Body of pancreas (tissue), 4 donors: ENCODE measurements at regions of chr9 and their contacts with region 1.

Region 1: GRCh38 chr9:132800038-132800648 is 77.9 kb downstream of the AK8 start:
- DNase-seq: peak; percentile 78 to 85 (median 84)
- ATAC-seq: peak; percentile 84
- H3K4me3 ChIP-seq: no peak overlapping the region
- H3K27ac ChIP-seq: no peak overlapping the region
- H3K4me1 ChIP-seq: peaks cover 5% of the 10 kb centered on the region
- H3K27me3 ChIP-seq: no peaks in the 10 kb centered on the region
- CTCF ChIP-seq: peak; percentile 77 to 95 (median 92)
- POLR2A ChIP-seq: no peak

Region 2: GRCh38 chr9:132411091-132411508 is 389.0 kb before region 1 on chr9:
- intact Hi-C with region 1: loop called (anchors 10 kb)
- DNase-seq: peak; percentile 53 to 71 (median 62)
- ATAC-seq: peak; percentile 63
- H3K4me3 ChIP-seq: no peak overlapping the region
- H3K27ac ChIP-seq: no peak overlapping the region
- H3K4me1 ChIP-seq: peaks cover 26% of the 10 kb centered on the region
- H3K27me3 ChIP-seq: peaks cover 0 to 23% of the 10 kb centered on the region in 2 donors
- CTCF ChIP-seq: peak in 6 of 7 experiments; percentile 43 to 74 (median 69)
- POLR2A ChIP-seq: no peak

Region 3: DNA sequence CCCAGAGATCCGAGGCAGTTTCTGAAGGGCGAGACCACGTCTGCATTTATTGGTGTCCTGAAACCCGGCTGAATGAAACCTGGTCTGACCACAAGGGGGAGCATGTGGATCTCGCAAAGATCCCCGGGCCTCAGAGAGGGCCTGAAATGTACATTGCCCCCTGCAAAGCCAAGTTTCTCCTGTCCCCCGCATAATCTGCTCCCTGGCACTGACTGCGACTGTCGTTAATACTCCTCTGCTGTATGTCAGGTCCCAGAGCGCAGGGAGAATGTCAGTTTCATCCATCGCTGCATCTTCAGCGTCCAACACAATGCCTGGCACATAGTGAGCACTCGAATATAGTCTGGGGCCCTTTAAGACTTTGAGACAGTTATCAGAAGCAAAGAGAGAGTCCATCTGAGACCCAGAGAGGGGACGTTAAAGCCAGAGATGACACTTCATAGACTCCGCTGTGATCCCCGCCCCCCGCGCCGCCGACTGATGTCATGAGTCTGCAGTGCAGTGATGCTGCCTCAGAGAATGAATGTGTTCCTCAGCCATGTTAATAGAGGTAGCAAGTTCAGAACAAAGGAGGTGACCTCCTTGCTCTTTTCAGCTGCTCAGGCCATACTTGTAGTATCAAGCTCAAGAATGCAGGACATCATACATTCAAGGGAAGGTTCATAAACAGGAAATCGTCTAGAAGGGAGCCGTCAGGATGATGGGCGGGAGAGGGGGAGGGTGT is 292.2 kb before region 1 on chr9:
- intact Hi-C with region 1: loop called (anchors 5 kb)
- DNase-seq: peak; percentile 68 to 79 (median 70)
- ATAC-seq: peak; percentile 65
- H3K4me3 ChIP-seq: no peak overlapping the region
- H3K27ac ChIP-seq: no peak overlapping the region
- H3K4me1 ChIP-seq: no peaks in the 10 kb centered on the region
- H3K27me3 ChIP-seq: no peaks in the 10 kb centered on the region
- CTCF ChIP-seq: peak; percentile 55 to 75 (median 72)
- POLR2A ChIP-seq: no peak

Region 4: DNA sequence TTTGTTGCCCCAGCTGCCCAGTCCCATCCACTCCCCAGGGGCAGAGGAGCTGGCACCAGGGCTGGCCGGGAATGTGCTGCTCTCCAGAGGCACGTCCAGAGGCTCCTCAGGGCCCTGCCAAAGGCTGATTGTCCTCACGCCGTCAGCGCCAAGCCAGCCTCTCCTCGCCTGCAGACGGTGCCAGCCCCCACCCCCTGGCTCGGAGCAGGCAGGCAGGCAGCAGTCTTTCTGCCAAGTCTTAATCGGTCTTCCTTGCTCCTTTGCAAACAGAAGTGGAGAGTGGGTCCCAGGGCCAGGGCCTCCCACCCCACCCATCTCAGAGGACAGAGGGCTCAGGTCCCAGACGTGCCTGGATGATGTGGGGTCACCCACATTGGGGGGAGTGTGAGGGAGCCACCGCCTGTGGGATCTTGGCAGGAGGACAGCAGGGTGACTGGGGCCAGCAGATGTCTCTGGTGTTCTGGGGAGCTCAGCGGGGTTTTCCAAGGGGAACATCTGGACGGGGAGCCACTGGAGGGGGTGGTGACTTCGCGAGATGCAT is 772.7 kb after region 1 on chr9:
- intact Hi-C with region 1: no loop called
- DNase-seq: peak in 1 of 4 donors; percentile 36
- ATAC-seq: no peak
- H3K4me3 ChIP-seq: no peak overlapping the region
- H3K27ac ChIP-seq: no peak overlapping the region
- H3K4me1 ChIP-seq: no peaks in the 10 kb centered on the region
- H3K27me3 ChIP-seq: no peaks in the 10 kb centered on the region
- CTCF ChIP-seq: no peak
- POLR2A ChIP-seq: no peak